ENCODE measurements at regions of chr7 and their contacts with region 1.

Region 1: DNA sequence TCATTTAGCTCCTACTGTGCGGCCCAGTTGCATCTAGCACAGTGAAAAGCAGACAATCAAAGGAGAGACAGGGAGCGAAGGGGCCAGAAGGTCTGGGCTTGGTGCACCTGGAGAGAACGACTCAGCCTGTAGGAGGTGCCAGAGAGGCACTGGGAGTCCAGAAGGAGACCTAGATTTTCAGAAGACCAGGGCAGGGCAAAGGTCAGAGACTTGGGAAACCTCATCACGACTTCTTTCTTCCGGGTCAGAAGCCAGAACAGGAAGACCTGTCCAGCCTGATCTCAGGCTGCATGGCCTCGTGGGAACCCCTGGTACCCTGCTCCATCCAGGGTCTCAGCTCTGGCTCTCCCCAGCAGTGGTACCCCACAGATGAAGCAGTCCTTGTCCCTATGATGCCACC is 5.2 kb downstream of the AGAP3 start:
- DNase-seq: peak; percentile 53 to 73 (median 64)
- H3K4me3 ChIP-seq: no peak overlapping the region
- H3K4me3 Mint-ChIP-seq: no peak overlapping the region
- H3K27ac ChIP-seq: no peak overlapping the region
- H3K27ac Mint-ChIP-seq: peak overlapping the region in 2 of 7 donors; percentile 25 to 59
- H3K4me1 ChIP-seq: peaks cover 37 to 49% of the 10 kb centered on the region in 2 donors
- H3K4me1 Mint-ChIP-seq: peaks cover 45% of the 10 kb centered on the region
- H3K27me3 ChIP-seq: no peaks in the 10 kb centered on the region
- H3K27me3 Mint-ChIP-seq: no peaks in the 10 kb centered on the region
- CTCF ChIP-seq: peak; percentile 75

Region 2: GRCh38 chr7:150753826-150754603 is 337.4 kb before region 1 on chr7:
- intact Hi-C with region 1: no loop called
- DNase-seq: peak; percentile 12 to 77 (median 20)
- H3K4me3 ChIP-seq: no peak overlapping the region
- H3K4me3 Mint-ChIP-seq: no peak overlapping the region
- H3K27ac ChIP-seq: peak overlapping the region in 1 of 2 donors; percentile 56
- H3K27ac Mint-ChIP-seq: peak overlapping the region in 3 of 7 donors; percentile 33 to 82 (median 78)
- H3K4me1 ChIP-seq: peaks cover 35 to 42% of the 10 kb centered on the region in 2 donors
- H3K4me1 Mint-ChIP-seq: peaks cover 45% of the 10 kb centered on the region
- H3K27me3 ChIP-seq: no peaks in the 10 kb centered on the region
- H3K27me3 Mint-ChIP-seq: peaks cover 1 to 4% (median 2%) of the 10 kb centered on the region in 3 donors
- CTCF ChIP-seq: no peak

Region 3: DNA sequence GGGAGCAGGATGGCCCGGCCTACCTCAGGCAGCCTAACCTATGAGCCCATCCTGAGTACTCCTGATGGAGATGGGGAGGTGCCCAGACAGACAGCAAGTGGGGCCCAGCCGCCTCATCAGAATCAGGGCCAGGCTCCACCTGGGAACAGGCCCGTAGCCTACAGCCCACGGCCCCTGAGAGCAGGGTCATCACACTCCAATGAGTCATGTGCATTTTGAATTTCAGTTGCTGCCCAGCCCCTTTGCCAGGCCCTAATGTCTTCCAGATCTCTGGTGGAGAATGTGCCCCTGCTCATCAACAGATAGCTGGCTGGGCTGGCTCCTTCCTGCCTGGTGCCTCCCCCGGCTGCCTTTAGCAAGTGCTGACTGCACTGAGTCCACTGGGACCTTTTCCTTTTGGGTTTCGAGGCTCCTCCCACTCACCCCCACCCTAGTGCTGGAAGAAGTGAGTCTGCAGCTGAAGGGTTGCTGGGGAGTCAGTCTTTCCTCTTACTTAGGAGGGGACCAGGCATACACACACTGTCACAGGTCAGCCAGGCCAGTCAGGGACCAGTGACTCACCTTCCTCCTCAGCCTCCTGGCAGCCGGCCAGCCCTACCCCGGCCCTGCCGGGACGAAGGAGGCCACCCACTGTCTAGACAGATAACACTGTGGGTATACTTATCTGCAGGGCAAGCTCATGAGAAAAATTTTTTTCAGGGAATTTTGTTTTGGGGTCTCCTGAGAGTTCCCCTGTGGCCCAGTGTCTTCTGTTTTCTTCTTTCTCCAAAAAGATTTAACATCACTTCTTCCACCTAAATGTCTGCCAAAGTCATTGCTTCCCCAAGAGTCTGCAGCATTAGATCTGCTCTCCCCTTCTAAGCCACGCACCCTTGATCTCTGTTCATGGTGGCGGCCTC is 52.2 kb before region 1 on chr7:
- intact Hi-C with region 1: loop called in 1 of 2 experiments (anchors 10 kb)
- DNase-seq: peak; percentile 85 to 89 (median 87)
- H3K4me3 ChIP-seq: no peak overlapping the region
- H3K4me3 Mint-ChIP-seq: peak overlapping the region in 1 of 2 donors; percentile 24
- H3K27ac ChIP-seq: peak overlapping the region in 1 of 2 donors; percentile 69
- H3K27ac Mint-ChIP-seq: peak overlapping the region; percentile 48 to 84 (median 79)
- H3K4me1 ChIP-seq: peaks cover 10 to 15% of the 10 kb centered on the region in 2 donors
- H3K4me1 Mint-ChIP-seq: peaks cover 17% of the 10 kb centered on the region
- H3K27me3 ChIP-seq: no peaks in the 10 kb centered on the region
- H3K27me3 Mint-ChIP-seq: peaks cover 0 to 6% (median 0%) of the 10 kb centered on the region in 3 donors
- CTCF ChIP-seq: no peak

Region 4: DNA sequence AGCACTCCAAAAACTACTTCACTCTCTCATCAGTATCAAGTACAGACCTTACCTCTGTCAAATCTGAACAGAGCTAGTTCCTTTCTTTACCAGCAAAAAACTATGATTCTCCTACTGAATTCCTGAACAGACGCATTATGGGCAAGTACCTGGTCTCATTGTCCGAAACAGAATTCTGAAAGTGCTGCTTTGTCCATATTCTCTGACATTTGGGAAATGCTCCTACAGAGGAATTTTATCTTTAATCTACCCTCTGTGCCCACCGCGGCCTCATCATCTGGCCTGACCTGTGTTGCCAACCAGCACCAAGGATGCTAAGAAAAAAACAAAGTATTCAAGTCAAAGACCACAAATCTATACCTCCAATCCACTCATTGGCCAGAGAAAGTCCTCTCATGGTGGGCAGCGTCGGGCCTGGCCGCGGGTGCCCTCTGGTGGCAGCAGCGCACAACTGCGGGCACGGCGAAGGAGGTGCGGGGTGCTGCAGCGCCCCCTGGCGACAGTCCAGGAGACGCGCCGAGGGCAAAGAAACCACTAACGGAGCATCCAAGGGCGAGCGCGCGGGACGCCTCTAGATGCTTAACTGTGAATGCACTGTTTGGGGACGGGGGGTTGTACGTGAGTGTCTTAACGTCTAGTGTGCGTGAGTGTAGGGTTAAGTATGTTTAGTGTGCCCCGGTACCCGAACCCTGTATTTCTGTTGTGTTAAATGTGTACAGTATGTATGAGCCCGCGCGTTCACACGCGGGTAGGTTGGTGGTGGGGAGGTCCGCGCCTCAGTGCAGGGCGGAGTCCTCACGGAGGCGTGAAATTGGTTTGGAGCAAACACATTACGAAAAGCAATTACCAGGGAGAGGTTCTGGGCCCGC is 81.1 kb after region 1 on chr7:
- intact Hi-C with region 1: no loop called
- DNase-seq: peak; percentile 72 to 81 (median 76)
- H3K4me3 ChIP-seq: no peak overlapping the region
- H3K4me3 Mint-ChIP-seq: peak overlapping the region in 1 of 2 donors; percentile 67
- H3K27ac ChIP-seq: no peak overlapping the region
- H3K27ac Mint-ChIP-seq: no peak overlapping the region
- H3K4me1 ChIP-seq: peaks cover 2 to 9% of the 10 kb centered on the region in 2 donors
- H3K4me1 Mint-ChIP-seq: peaks cover 9% of the 10 kb centered on the region
- H3K27me3 ChIP-seq: peaks cover 23 to 61% of the 10 kb centered on the region in 2 donors
- H3K27me3 Mint-ChIP-seq: peaks cover 50 to 80% (median 52%) of the 10 kb centered on the region in 3 donors
- CTCF ChIP-seq: peak; percentile 100